ENCODE measurements at regions of chr1 and their contacts with region 1.

Region 1: GRCh38 chr1:66242646-66243547 is 291.1 kb upstream of the SGIP1 start:
- DNase-seq: peak; percentile 71
- H3K4me3 ChIP-seq: peak overlapping the region in 1 of 2 experiments; percentile 36; a peak in 1 of 4 replicates
- H3K27ac ChIP-seq: peak overlapping the region; percentile 20 to 91; a peak in 3 of 4 replicates
- H3K4me1 ChIP-seq: peaks cover 39 to 69% of the 10 kb centered on the region in 2 experiments; a peak in 3 of 4 replicates
- H3K27me3 ChIP-seq: no peaks in the 10 kb centered on the region
- CTCF ChIP-seq: peak; percentile 100
- EP300 ChIP-seq: no peak
- RAD21 ChIP-seq: peak; percentile 100

Region 2: DNA sequence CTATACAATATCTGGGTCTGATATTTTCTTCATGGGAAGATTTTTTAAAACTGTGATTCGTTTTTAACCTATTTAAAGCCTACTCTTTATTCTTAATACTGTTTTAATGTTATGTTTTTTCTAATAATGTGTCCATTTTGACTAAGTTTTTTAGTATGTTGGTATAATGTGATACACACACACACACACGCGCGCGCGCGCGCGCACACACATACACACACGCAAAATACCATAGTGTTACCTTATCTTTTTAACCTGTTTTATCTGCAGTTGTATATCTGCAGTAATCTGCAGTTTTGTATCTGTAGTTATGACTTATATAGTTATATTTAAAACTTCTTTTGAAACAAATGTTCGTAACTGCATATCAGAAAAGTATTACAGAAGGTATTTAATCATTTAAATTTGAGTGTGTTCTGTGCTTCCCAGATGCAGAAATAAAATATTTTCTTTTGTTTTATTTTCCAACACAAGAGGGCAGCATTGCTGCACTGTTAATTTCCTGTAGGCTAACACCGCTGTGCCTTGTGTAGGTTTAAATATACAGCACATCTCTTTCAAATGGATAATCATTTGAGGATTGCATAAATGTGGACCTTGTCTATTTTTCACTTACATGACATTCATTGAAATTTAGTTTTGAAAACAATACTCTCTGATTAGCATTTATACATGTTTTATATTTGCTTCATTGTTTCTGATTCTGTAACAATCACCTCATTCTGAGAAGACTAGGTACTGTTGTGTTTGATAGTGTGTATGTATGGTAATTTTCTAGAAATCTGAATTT is 284.1 kb before region 1 on chr1:
- CTCF ChIA-PET with region 1: interaction called, 318 read pairs
- POLR2A ChIA-PET with region 1: no interaction called
- DNase-seq: peak; percentile 46
- H3K4me3 ChIP-seq: no peak overlapping the region
- H3K27ac ChIP-seq: no peak overlapping the region; a peak in 1 of 4 replicates
- H3K4me1 ChIP-seq: peaks cover 0 to 8% of the 10 kb centered on the region in 2 experiments; a peak in 1 of 4 replicates
- H3K27me3 ChIP-seq: no peaks in the 10 kb centered on the region
- CTCF ChIP-seq: peak; percentile 82
- EP300 ChIP-seq: no peak
- RAD21 ChIP-seq: peak; percentile 98

Region 3: DNA sequence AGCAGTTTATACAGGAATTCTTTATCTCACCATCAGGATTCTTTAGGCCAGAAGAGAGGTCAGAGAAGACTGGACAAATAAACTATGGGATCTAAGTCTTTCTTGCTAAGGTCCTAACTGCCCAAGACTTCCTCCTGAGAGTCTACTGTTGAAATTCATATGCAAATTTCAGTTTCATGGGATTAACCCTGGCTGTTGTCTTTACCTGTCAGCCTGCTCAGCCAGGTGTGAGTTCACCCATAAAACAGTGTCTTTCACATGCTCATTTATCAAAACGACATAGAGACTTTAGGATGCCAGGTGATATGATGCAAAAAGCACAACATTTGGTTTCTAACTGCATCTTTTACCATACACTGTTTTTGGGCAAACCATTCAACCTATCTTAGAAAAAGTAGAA is 239.2 kb before region 1 on chr1:
- CTCF ChIA-PET with region 1: interaction called, 203 read pairs
- POLR2A ChIA-PET with region 1: no interaction called
- DNase-seq: no peak
- H3K4me3 ChIP-seq: no peak overlapping the region
- H3K27ac ChIP-seq: no peak overlapping the region
- H3K4me1 ChIP-seq: peaks cover 0 to 15% of the 10 kb centered on the region in 2 experiments; a peak in 3 of 4 replicates
- H3K27me3 ChIP-seq: no peaks in the 10 kb centered on the region
- CTCF ChIP-seq: no peak
- EP300 ChIP-seq: no peak
- RAD21 ChIP-seq: no peak

Region 4: DNA sequence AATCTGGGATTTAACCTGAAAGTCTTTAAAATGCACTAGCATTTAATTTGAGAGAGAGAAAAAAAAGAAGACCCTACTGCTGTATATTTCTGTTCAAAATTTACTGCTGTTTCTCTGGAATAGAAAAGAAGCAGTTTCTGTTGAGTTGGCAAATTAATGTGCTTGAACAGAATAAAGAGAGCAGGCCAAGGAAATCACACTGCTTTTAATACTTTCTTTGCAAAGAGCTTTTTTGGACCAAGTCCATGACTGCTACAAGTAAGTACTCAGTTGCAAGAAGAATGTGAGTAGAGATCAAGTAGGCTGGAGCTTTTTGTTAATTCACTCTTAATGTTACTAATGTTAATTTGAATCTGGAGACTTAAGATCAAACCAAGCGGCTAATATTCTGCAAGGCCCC is 45.1 kb before region 1 on chr1:
- CTCF ChIA-PET with region 1: interaction called, 28 read pairs
- POLR2A ChIA-PET with region 1: no interaction called
- DNase-seq: no peak
- H3K4me3 ChIP-seq: no peak overlapping the region
- H3K27ac ChIP-seq: peak overlapping the region; percentile 27 to 87; a peak in 3 of 4 replicates
- H3K4me1 ChIP-seq: peaks cover 0 to 15% of the 10 kb centered on the region in 2 experiments; a peak in 2 of 4 replicates
- H3K27me3 ChIP-seq: no peaks in the 10 kb centered on the region
- CTCF ChIP-seq: no peak
- EP300 ChIP-seq: no peak
- RAD21 ChIP-seq: no peak

Region 5: DNA sequence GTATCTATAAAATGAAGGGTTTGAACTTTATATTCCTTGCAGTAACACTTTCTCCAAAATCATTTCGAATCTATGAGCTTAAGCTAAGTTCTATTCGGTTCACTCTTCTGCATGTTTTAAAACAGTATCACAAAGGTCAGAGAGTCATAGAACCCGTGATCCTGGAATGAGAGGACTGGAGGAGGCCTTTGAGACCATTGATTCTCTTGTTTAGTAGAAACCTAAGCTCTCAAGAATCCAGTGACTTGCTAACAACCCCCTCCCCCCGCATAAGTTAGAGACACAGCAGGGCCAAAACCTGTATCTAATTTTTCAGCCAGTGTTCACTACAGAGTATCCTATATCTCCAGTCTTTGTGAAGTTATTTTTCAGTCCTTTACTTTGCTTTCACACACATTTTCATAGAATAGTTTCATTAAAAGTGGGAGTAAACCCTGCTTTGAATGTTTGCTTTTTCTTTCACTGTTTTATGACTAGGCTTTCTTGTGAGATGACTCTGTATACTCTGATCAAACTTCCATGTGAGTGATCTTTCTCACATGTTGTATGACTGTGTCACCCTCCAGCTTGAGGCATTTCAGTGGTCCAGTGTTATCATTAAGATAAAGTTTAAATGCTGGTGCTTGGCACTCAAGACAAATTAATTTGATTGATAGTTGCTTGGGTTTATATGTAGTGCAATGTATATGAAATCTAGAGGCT is 15.7 kb after region 1 on chr1:
- CTCF ChIA-PET with region 1: interaction called, 39 read pairs
- POLR2A ChIA-PET with region 1: no interaction called
- DNase-seq: no peak
- H3K4me3 ChIP-seq: no peak overlapping the region
- H3K27ac ChIP-seq: peak overlapping the region in 1 of 2 experiments; percentile 16; a peak in 1 of 4 replicates
- H3K4me1 ChIP-seq: peaks cover 12 to 15% of the 10 kb centered on the region in 2 experiments; a peak in 3 of 4 replicates
- H3K27me3 ChIP-seq: no peaks in the 10 kb centered on the region
- CTCF ChIP-seq: no peak
- EP300 ChIP-seq: no peak
- RAD21 ChIP-seq: no peak

Region 6: DNA sequence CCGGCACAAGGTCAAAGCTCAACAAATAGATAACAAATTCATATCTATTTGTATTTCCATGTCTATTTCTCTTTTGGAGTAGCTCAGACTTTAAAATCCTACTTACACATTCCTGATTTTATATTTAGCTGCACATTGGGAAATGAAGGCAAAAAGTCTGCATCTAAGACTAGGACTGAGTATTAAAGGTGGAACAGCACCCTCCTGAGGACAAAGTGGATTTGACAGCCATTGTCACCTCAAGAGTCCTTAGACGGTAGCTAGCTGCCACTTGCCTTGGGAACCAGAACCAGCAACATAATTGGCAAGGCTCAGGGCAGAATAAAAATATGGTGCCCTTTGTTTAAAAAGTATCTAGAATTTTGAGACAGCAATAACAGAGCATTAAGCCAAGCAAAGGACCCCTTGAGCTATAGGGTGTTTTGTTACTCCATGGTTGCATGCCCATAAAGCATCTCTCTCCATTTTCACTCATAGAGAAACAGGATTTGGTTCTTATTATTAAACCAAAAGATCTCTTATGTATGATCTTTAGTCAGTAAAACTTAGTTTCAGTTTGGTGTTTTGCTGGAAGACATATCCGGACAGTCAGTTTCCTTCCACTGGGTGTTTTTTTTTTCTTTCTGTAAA is 261.1 kb after region 1 on chr1:
- CTCF ChIA-PET with region 1: interaction called, 201 read pairs
- POLR2A ChIA-PET with region 1: no interaction called
- DNase-seq: peak; percentile 53
- H3K4me3 ChIP-seq: no peak overlapping the region; a peak in 1 of 4 replicates
- H3K27ac ChIP-seq: peak overlapping the region in 1 of 2 experiments; percentile 86; a peak in 2 of 4 replicates
- H3K4me1 ChIP-seq: peaks cover 8 to 16% of the 10 kb centered on the region in 2 experiments; a peak in 3 of 4 replicates
- H3K27me3 ChIP-seq: no peaks in the 10 kb centered on the region
- CTCF ChIP-seq: peak; percentile 85
- EP300 ChIP-seq: peak in 1 of 2 experiments; percentile 46; a peak in 1 of 4 replicates
- RAD21 ChIP-seq: peak; percentile 97